Naive thymus-derived CD4-positive, alpha-beta T cell (primary cell): ENCODE measurements at regions of chr7 and their contacts with region 1.

Region 1: GRCh38 chr7:100563809-100564400 is 9.8 kb downstream of the SAP25 start:
- DNase-seq: peak; percentile 65 to 89 (median 77)
- ATAC-seq: peak; percentile 82
- H3K4me3 ChIP-seq: no peak overlapping the region
- H3K4me3 Mint-ChIP-seq: no peak overlapping the region
- H3K27ac ChIP-seq: no peak overlapping the region
- H3K27ac Mint-ChIP-seq: peak overlapping the region in 6 of 9 donors; percentile 9 to 76 (median 48)
- H3K4me1 ChIP-seq: peaks cover 8 to 22% of the 10 kb centered on the region in 2 donors
- H3K4me1 Mint-ChIP-seq: peaks cover 13 to 37% (median 28%) of the 10 kb centered on the region in 7 donors
- H3K27me3 ChIP-seq: no peaks in the 10 kb centered on the region
- H3K27me3 Mint-ChIP-seq: no peaks in the 10 kb centered on the region

Region 2: DNA sequence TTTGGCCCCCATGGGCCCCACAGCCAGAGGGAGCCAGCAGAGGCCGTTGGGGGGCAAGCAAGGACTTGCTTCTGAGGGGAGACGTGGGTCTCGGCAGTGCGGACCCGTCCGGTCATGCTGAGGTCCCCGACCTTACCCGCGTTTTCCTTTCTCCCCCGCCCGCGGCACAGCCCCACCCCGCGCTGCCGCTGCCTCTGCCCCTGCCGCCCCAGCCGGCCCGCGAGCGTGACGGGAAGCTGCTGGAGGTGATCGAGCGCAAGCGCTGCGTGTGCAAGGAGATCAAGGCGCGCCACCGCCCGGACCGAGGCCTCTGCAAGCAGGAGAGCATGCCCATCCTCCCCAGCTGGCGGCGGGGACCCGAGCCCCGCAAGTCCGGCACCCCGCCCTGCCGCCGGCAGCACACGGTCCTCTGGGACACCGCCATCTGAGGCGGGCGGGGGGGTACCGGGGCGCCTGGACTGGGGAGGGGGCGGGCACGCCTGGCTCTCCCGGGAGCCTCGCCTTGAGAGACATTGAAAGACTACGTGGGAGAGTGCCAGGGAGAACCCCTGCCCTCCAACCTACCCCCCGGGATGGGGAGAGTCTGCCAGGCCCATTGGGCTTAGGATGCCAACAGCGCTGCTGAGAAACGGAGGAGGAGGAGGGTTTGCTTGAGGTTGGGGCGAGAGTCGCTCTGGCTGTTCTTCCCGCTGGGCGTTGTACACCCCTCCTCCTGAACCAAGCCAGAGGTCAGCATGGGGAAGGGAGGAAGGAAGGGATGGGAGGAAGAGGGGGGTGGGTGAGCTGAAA is 70.2 kb before region 1 on chr7:
- CTCF ChIA-PET with region 1: interaction called, 11 read pairs
- POLR2A ChIA-PET with region 1: interaction called, 3 read pairs
- intact Hi-C with region 1: loop called in 1 of 2 experiments (anchors 2 kb)
- DNase-seq: peak in 8 of 9 donors; percentile 45 to 65 (median 56)
- ATAC-seq: peak; percentile 81
- H3K4me3 ChIP-seq: peak overlapping the region; percentile 53
- H3K4me3 Mint-ChIP-seq: peak overlapping the region; percentile 72 to 85 (median 80)
- H3K27ac ChIP-seq: peak overlapping the region; percentile 45
- H3K27ac Mint-ChIP-seq: peak overlapping the region; percentile 20 to 84 (median 67)
- H3K4me1 ChIP-seq: peaks cover 0 to 8% of the 10 kb centered on the region in 2 donors
- H3K4me1 Mint-ChIP-seq: peaks cover 8 to 26% (median 21%) of the 10 kb centered on the region in 7 donors
- H3K27me3 ChIP-seq: no peaks in the 10 kb centered on the region
- H3K27me3 Mint-ChIP-seq: peaks cover 0 to 26% (median 0%) of the 10 kb centered on the region in 5 donors

Region 3: GRCh38 chr7:100538654-100539435 is 25.1 kb before region 1 on chr7 and contains the start of gene AGFG2:
- CTCF ChIA-PET with region 1: interaction called, 33 read pairs
- POLR2A ChIA-PET with region 1: interaction called, 17 read pairs
- intact Hi-C with region 1: loop called (anchors 1 kb)
- DNase-seq: peak; percentile 98 to 100 (median 100)
- ATAC-seq: peak; percentile 99
- H3K4me3 ChIP-seq: peak within 1 kb of the TSS; percentile 73
- H3K4me3 Mint-ChIP-seq: peak within 1 kb of the TSS; percentile 85 to 100 (median 96)
- H3K27ac ChIP-seq: peak within 1 kb of the TSS; percentile 64
- H3K27ac Mint-ChIP-seq: peak within 1 kb of the TSS; percentile 82 to 97 (median 90)
- H3K4me1 ChIP-seq: peaks cover 30 to 39% of the 10 kb centered on the region in 2 donors
- H3K4me1 Mint-ChIP-seq: peaks cover 26 to 53% (median 48%) of the 10 kb centered on the region in 7 donors
- H3K27me3 ChIP-seq: no peaks in the 10 kb centered on the region
- H3K27me3 Mint-ChIP-seq: peaks cover 0 to 2% (median 0%) of the 10 kb centered on the region in 5 donors
- total RNA-seq, gene AGFG2: 15.8 to 42.4 (median 23.3) TPM

Region 4: DNA sequence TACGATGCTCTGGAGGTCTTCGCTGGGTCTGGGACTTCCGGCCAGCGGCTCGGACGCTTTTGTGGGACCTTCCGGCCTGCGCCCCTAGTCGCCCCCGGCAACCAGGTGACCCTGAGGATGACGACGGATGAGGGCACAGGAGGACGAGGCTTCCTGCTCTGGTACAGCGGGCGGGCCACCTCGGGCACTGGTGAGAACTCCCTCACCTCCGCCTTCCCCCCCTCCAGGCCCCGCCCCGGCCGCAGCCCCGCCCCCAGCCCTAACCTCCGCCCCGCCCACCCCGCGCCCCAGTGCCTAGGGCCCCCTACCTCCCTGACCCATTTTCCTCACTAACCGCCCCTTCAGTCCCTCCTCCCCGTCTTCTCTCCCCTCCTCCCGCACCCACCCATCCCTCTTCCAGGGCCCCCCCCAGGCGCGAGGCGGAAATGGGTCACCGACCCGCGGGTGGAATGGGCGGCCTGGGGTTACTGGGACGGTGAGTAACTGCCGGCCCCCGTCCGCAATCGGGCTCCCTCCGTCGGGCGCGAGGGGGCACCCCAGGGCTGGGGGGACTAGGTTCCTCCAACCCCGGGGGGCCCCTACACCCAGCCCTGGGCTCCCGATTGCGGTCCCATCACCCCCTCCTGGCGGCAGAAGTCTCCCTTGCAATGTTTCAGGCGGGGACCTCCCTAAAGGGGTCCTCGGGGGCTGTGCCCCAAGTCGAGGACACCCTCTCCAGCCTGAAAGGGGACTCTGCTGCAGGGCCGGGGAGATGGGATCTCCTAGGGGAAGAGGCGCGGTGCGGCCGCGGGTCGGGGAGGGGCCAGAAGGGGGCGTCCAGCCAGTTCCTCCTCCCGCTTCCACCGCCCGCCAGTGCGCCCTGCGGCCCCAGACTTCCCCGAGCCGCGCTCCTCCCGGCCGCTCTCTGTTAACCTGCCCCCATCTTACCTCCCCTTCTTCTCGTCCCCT is 40.4 kb after region 1 on chr7:
- CTCF ChIA-PET with region 1: interaction called, 6 read pairs
- POLR2A ChIA-PET with region 1: interaction called, 4 read pairs
- intact Hi-C with region 1: loop called in 1 of 2 experiments (anchors 2 kb)
- DNase-seq: peak in 8 of 9 donors; percentile 47 to 81 (median 59)
- ATAC-seq: peak; percentile 81
- H3K4me3 ChIP-seq: peak overlapping the region; percentile 70
- H3K4me3 Mint-ChIP-seq: peak overlapping the region; percentile 79 to 94 (median 87)
- H3K27ac ChIP-seq: peak overlapping the region; percentile 67
- H3K27ac Mint-ChIP-seq: peak overlapping the region; percentile 21 to 92 (median 84)
- H3K4me1 ChIP-seq: peaks cover 6 to 10% of the 10 kb centered on the region in 2 donors
- H3K4me1 Mint-ChIP-seq: peaks cover 7 to 35% (median 16%) of the 10 kb centered on the region in 7 donors
- H3K27me3 ChIP-seq: no peaks in the 10 kb centered on the region
- H3K27me3 Mint-ChIP-seq: peaks cover 0 to 15% (median 0%) of the 10 kb centered on the region in 5 donors

Region 5: GRCh38 chr7:100673300-100673941 is 109.5 kb after region 1 on chr7 and contains the start of gene GNB2:
- CTCF ChIA-PET with region 1: interaction called, 3 read pairs
- POLR2A ChIA-PET with region 1: interaction called, 3 read pairs
- intact Hi-C with region 1: loop called in 1 of 2 experiments (anchors 1 kb)
- DNase-seq: peak; percentile 92 to 100 (median 96)
- ATAC-seq: peak; percentile 75
- H3K4me3 ChIP-seq: peak within 1 kb of the TSS; percentile 82
- H3K4me3 Mint-ChIP-seq: peak within 1 kb of the TSS; percentile 89 to 99 (median 96)
- H3K27ac ChIP-seq: peak within 1 kb of the TSS; percentile 98
- H3K27ac Mint-ChIP-seq: peak within 1 kb of the TSS; percentile 88 to 97 (median 95)
- H3K4me1 ChIP-seq: no peaks in the 10 kb centered on the region
- H3K4me1 Mint-ChIP-seq: peaks cover 9 to 25% (median 15%) of the 10 kb centered on the region in 7 donors
- H3K27me3 ChIP-seq: no peaks in the 10 kb centered on the region
- H3K27me3 Mint-ChIP-seq: peaks cover 0 to 17% (median 0%) of the 10 kb centered on the region in 5 donors
- total RNA-seq, gene GNB2: 98.2 to 215 (median 132) TPM

Region 6: DNA sequence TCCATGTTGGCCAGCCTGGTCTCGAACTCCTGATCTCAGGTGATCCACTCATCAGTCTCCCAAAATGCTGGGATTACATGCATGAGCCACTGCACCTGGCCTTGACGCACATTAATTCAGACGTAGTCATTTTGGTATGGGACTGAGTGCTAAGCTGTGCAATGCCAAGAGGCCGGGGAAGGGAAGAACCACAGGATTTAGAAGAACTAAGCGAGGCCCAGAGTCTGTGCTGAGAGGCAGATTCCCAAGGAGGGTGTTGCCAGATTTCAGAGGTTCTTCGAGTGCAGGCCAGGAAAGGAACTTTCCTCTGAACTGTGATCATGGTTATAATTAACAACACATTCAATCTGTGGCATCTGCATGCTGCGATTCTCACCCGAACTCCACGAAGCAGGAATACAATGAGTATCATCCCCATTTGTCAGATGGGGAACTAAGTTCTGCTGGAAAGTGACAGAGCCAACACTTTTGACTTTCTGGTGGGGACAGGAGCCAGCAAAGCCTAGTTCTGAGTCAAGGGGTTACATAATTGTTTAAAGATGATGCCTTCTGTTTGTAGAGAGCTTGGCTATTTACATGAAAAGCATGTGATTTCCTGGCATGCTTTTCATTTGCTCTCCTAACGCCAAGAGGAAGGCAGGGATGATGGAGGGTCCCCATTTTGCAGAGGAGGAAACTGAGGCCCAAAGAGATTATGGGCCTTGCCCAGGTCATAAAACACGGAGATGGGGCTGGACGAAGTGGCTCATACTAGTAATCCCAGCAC is 163.3 kb after region 1 on chr7:
- CTCF ChIA-PET with region 1: interaction called, 6 read pairs
- POLR2A ChIA-PET with region 1: no interaction called
- intact Hi-C with region 1: loop called (anchors 1 kb)
- DNase-seq: no peak
- ATAC-seq: no peak
- H3K4me3 ChIP-seq: no peak overlapping the region
- H3K4me3 Mint-ChIP-seq: no peak overlapping the region
- H3K27ac ChIP-seq: no peak overlapping the region
- H3K27ac Mint-ChIP-seq: peak overlapping the region in 1 of 9 donors; percentile 22
- H3K4me1 ChIP-seq: no peaks in the 10 kb centered on the region
- H3K4me1 Mint-ChIP-seq: peaks cover 0 to 5% (median 0%) of the 10 kb centered on the region in 7 donors
- H3K27me3 ChIP-seq: peaks cover 0 to 4% of the 10 kb centered on the region in 2 donors
- H3K27me3 Mint-ChIP-seq: peaks cover 16 to 31% (median 21%) of the 10 kb centered on the region in 5 donors